Panc1 (cell line): ENCODE measurements at regions of chr4 and their contacts with region 1.

Region 1: GRCh38 chr4:76740866-76741662 is 156.9 kb downstream of the SOWAHB start:
- DNase-seq: no peak
- ATAC-seq: no peak
- H3K4me3 ChIP-seq: no peak overlapping the region
- H3K27ac ChIP-seq: no peak overlapping the region
- H3K4me1 ChIP-seq: no peaks in the 10 kb centered on the region
- H3K27me3 ChIP-seq: no peaks in the 10 kb centered on the region
- CTCF ChIP-seq: no peak

Region 2: GRCh38 chr4:76485450-76485849 is 255.6 kb before region 1 on chr4:
- CTCF ChIA-PET with region 1: interaction called, 10 read pairs
- POLR2A ChIA-PET with region 1: no interaction called
- in situ Hi-C with region 1: no loop called
- intact Hi-C with region 1: no loop called
- DNase-seq: no peak
- ATAC-seq: no peak
- H3K4me3 ChIP-seq: no peak overlapping the region
- H3K27ac ChIP-seq: no peak overlapping the region
- H3K4me1 ChIP-seq: no peaks in the 10 kb centered on the region
- H3K27me3 ChIP-seq: no peaks in the 10 kb centered on the region
- CTCF ChIP-seq: no peak

Region 3: DNA sequence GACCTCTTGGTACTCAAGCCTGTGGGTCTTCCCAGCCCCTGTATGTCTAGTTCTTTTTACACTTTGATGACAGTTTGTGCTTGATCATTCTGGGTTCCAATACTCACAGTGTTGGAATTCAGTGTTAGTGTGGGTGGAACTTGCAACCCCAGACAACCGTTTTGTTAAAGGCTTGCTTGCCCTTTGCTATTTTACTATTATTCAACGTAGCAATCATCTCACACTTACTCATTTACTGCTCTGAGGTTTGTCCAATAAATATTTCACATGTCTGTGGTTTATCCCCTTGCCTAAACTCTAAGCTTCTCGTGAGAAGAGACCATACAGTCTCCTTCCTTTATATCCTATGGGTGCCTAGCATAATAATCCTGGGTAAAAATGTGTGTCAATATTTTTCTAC is 431.3 kb after region 1 on chr4:
- CTCF ChIA-PET with region 1: no interaction called
- POLR2A ChIA-PET with region 1: no interaction called
- in situ Hi-C with region 1: no loop called
- intact Hi-C with region 1: no loop called
- DNase-seq: no peak
- ATAC-seq: no peak
- H3K4me3 ChIP-seq: no peak overlapping the region
- H3K27ac ChIP-seq: no peak overlapping the region
- H3K4me1 ChIP-seq: no peaks in the 10 kb centered on the region
- H3K27me3 ChIP-seq: no peaks in the 10 kb centered on the region
- CTCF ChIP-seq: no peak